ENCODE measurements at regions of chr6 and their contacts with region 1.

Region 1: DNA sequence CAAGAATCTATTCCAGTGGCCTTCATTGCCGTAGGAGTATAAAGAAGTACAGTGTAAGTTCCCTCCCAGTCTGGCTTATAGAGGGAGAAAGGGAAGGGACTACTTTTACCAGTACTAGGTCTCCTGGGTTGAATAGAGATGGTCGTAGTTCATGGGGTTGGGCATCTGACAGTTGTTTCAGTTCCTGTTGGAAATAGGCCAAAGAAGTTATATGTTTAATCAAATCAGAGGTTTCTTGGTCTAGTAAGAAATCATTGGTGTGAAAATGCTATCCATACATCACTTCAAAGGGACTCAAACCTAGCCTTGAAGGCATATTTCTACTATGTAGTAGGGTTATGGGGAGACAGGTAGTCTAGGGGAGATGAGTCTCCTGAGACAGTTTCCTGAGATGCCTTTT is 45.6 kb upstream of the MAN1A1 start:
- DNase-seq: no peak
- ATAC-seq: peak; percentile 91
- H3K4me3 Mint-ChIP-seq: no peak overlapping the region
- H3K27ac Mint-ChIP-seq: no peak overlapping the region
- H3K4me1 Mint-ChIP-seq: peaks cover 21% of the 10 kb centered on the region
- H3K27me3 Mint-ChIP-seq: peaks cover 13% of the 10 kb centered on the region
- CTCF ChIP-seq: no peak

Region 2: GRCh38 chr6:119322715-119323350 is 72.4 kb before region 1 on chr6:
- CTCF ChIA-PET with region 1: no interaction called
- POLR2A ChIA-PET with region 1: no interaction called
- intact Hi-C with region 1: no loop called
- DNase-seq: no peak
- ATAC-seq: no peak
- H3K4me3 Mint-ChIP-seq: no peak overlapping the region
- H3K27ac Mint-ChIP-seq: no peak overlapping the region
- H3K4me1 Mint-ChIP-seq: no peaks in the 10 kb centered on the region
- H3K27me3 Mint-ChIP-seq: no peaks in the 10 kb centered on the region
- CTCF ChIP-seq: no peak

Region 3: GRCh38 chr6:119533603-119534279 is 138.5 kb after region 1 on chr6:
- CTCF ChIA-PET with region 1: no interaction called
- POLR2A ChIA-PET with region 1: no interaction called
- intact Hi-C with region 1: loop called (anchors 2 kb)
- DNase-seq: no peak
- ATAC-seq: peak; percentile 84
- H3K4me3 Mint-ChIP-seq: peak overlapping the region; percentile 30
- H3K27ac Mint-ChIP-seq: peak overlapping the region; percentile 76
- H3K4me1 Mint-ChIP-seq: peaks cover 20% of the 10 kb centered on the region
- H3K27me3 Mint-ChIP-seq: no peaks in the 10 kb centered on the region
- CTCF ChIP-seq: no peak

Measured in activated B cell treated with CpG ODN at 0.5 μM for 24 hours (primary cell).